ENCODE measurements at regions of chr17 and their contacts with region 1.

Region 1: DNA sequence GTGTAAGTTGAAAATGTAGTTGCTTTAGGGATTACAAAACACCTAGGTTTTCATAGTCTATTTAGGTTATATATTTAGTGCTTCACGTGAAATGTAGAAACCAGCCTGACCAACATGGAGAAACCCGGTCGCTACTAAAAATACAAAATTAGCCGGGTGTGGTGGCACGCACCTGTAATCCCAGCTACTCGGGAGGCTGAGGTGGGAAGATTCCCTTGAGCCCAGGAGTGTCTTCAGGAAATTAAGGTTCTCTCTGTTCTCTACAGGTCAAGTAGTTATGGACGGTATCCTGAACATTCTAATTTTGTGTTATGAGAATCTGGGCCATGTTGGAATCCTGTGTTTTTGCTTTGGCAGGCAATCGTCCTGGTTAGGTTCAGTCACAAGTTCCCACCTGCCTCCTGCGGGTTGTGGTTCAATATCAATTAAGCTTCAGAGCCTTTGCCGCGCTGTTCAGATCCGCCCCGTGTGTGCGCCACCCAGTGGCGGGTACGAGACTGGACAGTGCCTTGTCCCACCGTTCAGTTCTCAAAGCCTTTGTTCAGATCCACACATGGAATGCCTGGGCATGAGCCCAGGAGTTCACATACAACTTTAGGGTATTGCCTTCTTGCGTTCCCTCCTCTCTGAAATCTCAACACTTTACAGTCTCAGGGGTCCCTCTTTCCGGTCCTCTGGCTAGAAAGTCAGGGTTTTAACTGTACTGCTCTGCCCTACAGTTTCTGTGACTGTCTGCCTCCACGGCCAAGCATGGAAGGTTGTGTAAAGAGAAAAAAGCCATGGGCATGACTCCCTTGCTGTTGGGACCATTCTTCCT is 41.7 kb downstream of the HEATR6 start:
- DNase-seq: peak; percentile 88
- H3K4me3 ChIP-seq: no peak overlapping the region
- H3K27ac ChIP-seq: no peak overlapping the region
- H3K4me1 ChIP-seq: no peaks in the 10 kb centered on the region
- H3K27me3 ChIP-seq: no peaks in the 10 kb centered on the region
- CTCF ChIP-seq: peak; percentile 99

Region 2: GRCh38 chr17:59311130-59311920 is 725.7 kb before region 1 on chr17:
- CTCF ChIA-PET with region 1: interaction called, 8 read pairs
- POLR2A ChIA-PET with region 1: no interaction called
- intact Hi-C with region 1: loop called (anchors 10 kb)
- DNase-seq: peak; percentile 80
- H3K4me3 ChIP-seq: no peak overlapping the region
- H3K27ac ChIP-seq: no peak overlapping the region
- H3K4me1 ChIP-seq: no peaks in the 10 kb centered on the region
- H3K27me3 ChIP-seq: no peaks in the 10 kb centered on the region
- CTCF ChIP-seq: peak; percentile 84

Region 3: GRCh38 chr17:59521204-59522126 is 515.5 kb before region 1 on chr17:
- CTCF ChIA-PET with region 1: no interaction called
- POLR2A ChIA-PET with region 1: no interaction called
- intact Hi-C with region 1: loop called (anchors 10 kb)
- DNase-seq: peak; percentile 78
- H3K4me3 ChIP-seq: no peak overlapping the region
- H3K27ac ChIP-seq: no peak overlapping the region
- H3K4me1 ChIP-seq: peaks cover 3% of the 10 kb centered on the region
- H3K27me3 ChIP-seq: peaks cover 14% of the 10 kb centered on the region
- CTCF ChIP-seq: peak; percentile 89

Region 4: GRCh38 chr17:59746849-59747445 is 290.1 kb before region 1 on chr17:
- CTCF ChIA-PET with region 1: no interaction called
- POLR2A ChIA-PET with region 1: no interaction called
- intact Hi-C with region 1: loop called (anchors 10 kb)
- DNase-seq: peak; percentile 63
- H3K4me3 ChIP-seq: no peak overlapping the region
- H3K27ac ChIP-seq: no peak overlapping the region
- H3K4me1 ChIP-seq: peaks cover 7% of the 10 kb centered on the region
- H3K27me3 ChIP-seq: no peaks in the 10 kb centered on the region
- CTCF ChIP-seq: peak; percentile 78

Region 5: GRCh38 chr17:59914274-59914854 is 122.6 kb before region 1 on chr17:
- CTCF ChIA-PET with region 1: interaction called, 11 read pairs
- POLR2A ChIA-PET with region 1: no interaction called
- intact Hi-C with region 1: loop called (anchors 10 kb)
- DNase-seq: peak; percentile 67
- H3K4me3 ChIP-seq: no peak overlapping the region
- H3K27ac ChIP-seq: no peak overlapping the region
- H3K4me1 ChIP-seq: no peaks in the 10 kb centered on the region
- H3K27me3 ChIP-seq: no peaks in the 10 kb centered on the region
- CTCF ChIP-seq: peak; percentile 72